GM10248 (cell line): ENCODE measurements at regions of chr20 and their contacts with region 1.

Region 1: DNA sequence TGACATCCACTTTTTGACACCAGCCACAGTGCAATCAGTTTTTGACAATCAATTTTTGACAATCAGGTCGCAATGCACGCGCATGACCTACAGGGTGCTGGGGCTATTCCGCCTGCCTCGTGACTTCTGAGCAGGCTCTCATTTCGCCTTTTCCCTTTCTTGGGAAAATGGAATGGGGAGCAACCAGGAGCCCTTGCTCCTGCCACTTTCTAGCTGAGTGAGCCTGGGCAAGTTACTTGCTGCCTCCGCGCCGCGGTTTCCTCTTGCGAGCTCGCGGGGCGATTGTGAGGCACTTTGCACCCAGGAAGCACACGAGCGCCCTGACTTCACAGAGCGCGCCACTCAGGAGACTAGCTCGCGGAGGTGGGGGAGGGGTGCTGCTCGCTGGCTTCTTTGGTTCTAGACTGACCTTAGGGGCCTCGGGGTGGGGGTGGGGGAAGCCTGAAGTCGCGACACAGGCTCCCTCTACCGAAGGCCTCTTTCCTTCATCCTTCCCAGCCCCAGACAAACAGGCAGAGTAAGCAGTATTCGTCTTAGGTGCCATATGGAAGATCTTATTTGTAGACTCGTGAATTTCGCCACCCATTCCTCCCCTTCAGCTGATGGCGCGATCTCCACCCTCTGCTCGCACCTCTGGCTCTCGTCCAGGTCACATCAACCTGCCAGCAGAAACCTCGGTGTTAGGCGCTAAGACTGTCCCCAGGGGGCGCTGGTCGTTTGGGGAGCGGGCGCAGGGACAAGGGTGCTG is 4.6 kb downstream of the TP53TG5 start:
- DNase-seq: peak; percentile 84
- CTCF ChIP-seq: peak; percentile 93

Region 2: DNA sequence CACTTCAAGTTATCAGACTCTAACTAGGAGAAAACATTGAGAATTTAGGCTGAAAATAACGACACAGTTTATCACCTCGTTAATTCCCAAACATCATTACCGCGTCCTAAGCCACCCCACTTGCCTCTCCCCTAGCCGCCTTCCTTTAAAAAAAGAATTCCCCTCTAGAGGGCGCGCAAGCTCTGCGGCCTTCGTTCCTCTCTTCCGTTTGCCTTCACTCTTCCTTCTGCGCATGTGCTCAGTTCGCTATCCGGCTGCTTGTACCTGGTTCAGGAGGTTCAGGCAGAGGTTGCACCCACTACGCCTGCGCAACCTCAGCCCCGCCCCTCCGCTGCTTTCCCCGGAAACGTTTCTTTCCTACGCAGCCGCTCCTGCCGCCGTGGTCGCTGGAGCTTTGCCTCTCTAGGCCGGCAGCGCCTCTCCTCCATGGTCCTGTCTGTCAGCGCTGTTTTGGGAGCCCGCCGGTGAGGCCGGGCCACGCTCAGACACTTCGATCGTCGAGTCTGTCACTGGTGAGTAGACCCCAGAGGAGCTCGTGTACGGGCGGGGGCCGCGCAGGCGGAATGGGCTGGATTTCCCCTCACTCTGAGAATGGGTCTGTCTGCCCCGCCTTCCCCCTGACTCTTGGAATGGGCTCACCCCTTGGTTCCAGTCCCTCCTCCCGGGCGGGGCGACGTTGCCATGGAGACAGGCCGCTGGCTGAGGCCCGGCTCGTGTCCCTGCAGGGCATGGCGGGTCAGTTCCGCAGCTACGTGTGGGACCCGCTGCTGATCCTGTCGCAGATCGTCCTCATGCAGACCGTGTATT is 10.5 kb before region 1 on chr20 and contains the start of gene SYS1:
- CTCF ChIA-PET with region 1: interaction called, 83 read pairs
- POLR2A ChIA-PET with region 1: interaction called, 4 read pairs
- DNase-seq: peak; percentile 96
- CTCF ChIP-seq: peak; percentile 74

Region 3: DNA sequence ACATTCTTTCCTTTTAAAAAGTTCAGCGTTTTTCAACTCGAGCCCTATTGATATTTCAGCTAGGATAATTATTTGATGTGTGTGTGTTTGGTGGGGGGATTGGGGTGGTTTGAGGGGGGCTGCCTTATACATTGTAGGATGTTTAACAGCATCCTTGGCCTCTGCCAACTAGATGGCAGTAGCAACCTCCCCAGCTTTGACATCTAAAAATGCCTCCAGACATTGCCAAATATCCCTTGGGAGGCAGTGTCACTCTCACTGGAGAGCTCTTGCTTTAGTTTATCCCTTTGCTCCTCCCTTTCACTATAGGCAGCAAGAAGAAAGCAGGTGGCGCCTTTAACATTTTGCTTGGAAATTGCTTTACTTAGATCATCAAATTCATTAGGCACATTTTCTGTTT is 19.2 kb after region 1 on chr20:
- CTCF ChIA-PET with region 1: interaction called, 30 read pairs
- POLR2A ChIA-PET with region 1: no interaction called
- DNase-seq: no peak
- CTCF ChIP-seq: no peak

Region 4: DNA sequence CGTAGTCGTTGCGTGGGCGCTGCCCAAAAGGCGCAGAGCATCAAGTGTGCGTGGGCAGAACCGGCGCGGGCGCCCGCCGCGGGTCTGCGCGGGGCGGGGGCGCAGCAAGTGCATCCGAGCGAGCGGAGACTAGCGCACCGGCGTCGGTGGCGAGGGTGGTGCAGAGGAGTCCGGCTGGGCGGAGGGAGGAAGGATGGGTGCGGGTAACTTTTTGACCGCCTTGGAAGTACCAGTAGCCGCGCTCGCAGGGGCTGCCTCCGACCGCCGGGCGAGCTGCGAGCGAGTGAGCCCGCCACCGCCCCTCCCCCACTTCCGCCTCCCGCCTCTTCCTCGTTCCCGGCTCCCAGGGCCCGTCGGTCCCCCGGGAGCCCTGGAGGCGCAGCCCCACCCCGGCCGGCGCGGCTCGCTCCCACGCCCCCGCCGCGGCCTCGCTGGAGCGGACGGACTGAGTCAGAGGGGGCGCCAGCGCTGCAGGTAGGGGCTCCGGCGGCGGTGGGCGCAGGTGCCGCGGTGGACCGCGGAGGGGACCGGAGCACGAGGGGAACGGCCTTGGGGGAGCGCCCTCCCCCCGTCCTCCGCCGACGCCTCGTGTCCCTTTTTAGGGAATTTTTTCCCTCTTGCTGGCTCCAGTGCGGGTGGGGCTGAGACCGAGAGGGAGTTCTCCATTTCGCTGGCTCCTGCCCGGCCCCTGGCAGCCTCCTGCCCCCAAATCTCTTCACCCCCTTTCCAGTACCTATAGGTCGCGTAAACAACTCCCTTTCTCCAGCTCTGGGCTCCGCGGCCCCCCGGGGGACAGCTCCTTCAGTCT is 32.9 kb after region 1 on chr20:
- CTCF ChIA-PET with region 1: interaction called, 33 read pairs
- POLR2A ChIA-PET with region 1: no interaction called
- DNase-seq: peak; percentile 46
- CTCF ChIP-seq: no peak

Region 5: DNA sequence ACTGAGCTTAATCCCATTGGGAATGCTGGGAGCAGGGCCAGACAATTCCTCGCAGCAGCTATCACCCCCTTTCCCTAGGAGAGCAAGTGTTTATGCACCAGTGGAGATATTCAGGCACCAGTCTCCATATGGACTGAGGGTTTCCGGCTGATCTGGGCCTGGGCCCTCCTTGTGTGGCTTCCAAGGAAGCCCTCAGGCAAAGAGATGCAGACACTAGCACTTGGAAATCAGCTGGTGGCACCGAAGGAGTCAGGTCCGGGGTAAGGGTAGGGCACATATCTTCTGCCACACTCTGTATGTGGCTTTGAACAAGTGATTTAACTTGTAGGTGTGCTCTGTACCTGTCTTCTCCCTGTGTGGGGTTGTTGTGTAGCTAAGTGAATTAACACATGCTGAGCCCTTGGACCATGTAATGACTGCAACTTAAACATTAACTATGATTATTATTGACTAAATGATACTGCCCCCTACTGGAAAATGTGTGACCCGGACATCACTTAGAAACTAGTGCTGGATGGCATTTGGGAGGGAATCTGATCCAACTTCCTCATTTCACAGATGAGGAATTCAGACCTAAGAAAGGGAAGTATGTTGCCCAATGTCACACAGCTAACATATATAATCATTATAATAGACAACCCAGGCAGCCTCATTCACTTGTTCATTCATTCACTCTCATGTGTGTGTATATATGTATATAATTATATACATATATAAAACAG is 76.7 kb after region 1 on chr20:
- CTCF ChIA-PET with region 1: interaction called, 22 read pairs
- POLR2A ChIA-PET with region 1: no interaction called
- DNase-seq: peak; percentile 32
- CTCF ChIP-seq: peak; percentile 49